ENCODE measurements at regions of chr18 and their contacts with region 1.

Region 1: DNA sequence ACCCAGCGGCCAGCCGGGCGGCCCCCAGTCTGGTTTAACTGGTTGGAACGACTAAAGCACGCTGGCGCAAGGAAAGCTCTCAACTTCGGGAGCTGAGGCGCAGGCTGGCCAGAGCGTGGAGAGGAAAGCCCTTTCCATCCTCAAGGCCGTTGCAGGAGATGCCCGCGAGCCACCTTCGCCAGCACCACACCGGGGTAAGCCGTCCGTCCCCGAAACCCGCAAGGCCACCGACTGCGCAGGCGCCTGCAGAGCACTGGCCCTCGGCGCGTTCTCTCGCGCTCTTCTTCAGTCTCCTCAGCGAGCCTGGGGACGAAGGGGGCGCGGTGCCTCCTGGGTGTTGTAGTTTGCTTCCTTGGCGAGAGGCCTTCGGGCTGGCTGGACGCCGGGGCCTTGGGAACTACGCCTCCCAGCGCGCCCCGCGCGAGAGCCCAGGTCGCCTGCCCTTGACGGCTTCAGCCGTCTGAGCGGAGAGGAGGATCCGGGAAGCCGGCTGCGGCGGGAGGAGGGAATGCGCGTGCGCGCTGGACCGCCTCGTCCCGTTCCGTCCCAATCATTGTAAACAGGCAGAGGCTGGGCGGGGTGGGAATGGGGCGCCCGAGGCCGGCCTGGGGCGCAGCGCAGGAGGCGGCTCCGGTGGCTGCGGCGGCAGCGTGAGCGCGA is at the start of gene RALBP1:
- DNase-seq: peak; percentile 99
- H3K4me3 ChIP-seq: peak within 1 kb of the TSS; percentile 88
- CTCF ChIP-seq: no peak

Region 2: DNA sequence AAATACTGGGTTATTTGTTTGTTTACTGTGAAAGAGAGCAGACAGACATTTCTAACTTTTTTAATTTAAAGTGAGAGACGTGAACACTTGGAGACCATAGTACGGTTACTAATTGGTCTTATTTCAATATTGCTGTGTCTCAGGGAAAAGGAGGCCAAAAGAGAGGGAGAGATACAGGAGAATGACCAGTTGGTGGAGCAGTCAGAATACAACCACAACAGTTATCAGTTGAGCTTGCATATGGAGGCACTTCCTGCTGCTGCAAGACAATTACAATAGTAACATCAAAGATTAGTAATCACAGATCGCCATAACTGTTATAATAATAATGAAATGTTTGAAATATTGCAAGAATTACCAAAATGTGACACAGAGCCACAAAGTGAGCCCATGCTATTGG is 82.4 kb before region 1 on chr18:
- in situ Hi-C with region 1: loop called (anchors 5 kb)
- DNase-seq: no peak
- H3K4me3 ChIP-seq: no peak overlapping the region
- CTCF ChIP-seq: no peak

Region 3: DNA sequence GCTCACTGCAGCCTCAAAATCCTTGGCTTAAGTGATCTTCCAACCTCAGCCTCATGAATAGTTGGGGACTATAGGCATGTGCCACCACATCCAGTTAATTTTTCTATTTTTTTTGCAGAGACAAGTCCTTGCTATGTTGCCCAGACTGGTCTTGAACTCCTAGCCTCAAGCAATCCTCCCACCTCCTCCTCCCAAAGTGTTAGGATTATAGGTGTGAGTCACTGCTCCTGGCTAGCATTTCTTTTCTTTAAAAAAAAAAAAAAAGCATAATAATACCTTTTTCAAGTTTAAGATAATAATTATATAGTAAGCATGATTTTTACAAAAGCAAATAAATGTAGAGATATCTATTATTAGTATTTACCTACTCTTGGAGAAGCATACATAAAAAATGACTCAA is 103.2 kb after region 1 on chr18:
- in situ Hi-C with region 1: no loop called
- DNase-seq: no peak
- H3K4me3 ChIP-seq: no peak overlapping the region
- CTCF ChIP-seq: no peak